WTC11 (cell line): ENCODE measurements at regions of chr11 and their contacts with region 1.

Region 1: DNA sequence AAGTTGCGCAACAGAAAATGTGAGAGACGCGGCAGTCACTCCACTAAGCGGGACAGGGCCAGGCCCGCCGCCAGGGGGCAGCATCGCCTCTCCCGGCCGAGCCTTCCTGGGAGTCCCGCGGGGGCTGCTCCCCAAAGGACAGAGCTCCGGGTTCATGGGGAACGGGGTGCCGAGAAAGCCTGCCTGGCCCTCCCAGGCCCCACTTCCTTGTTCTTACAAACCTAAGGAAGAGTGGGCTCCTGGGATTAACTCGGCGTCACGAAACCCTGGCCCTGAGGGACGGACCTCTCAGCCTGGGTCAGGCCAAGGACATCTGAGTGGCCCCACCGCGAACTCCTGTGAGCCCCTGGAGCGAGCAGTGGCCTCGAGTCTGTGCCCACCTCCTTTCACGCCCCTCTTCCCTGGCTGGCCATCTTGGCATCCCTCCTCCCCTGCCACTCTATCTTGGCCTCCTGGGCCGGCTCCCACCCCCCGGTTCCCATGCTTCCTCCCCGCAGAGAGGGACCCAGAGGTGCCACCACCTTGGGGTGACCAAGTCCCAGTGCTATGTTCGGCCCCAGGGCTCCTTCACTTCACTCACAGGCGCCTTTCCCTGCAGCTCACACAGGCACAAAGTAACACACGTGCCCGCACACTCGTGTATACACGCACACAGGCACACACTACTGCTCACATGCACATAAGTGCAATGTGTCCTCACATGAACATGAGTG is 99.9 kb upstream of the FGF3 start:
- DNase-seq: peak; percentile 93
- ATAC-seq: peak; percentile 70
- H3K4me3 Mint-ChIP-seq: no peak overlapping the region
- H3K27ac Mint-ChIP-seq: no peak overlapping the region
- H3K4me1 Mint-ChIP-seq: 0 out of 2 replicates have a peak, but pooled peaks cover 3% of the 10 kb centered on the region
- H3K27me3 Mint-ChIP-seq: peaks cover 32% of the 10 kb centered on the region
- CTCF ChIP-seq: peak; percentile 87

Region 2: GRCh38 chr11:69888483-69889076 is 30.5 kb before region 1 on chr11:
- CTCF ChIA-PET with region 1: interaction called, 74 read pairs
- POLR2A ChIA-PET with region 1: no interaction called
- DNase-seq: peak; percentile 92
- ATAC-seq: peak; percentile 58
- H3K4me3 Mint-ChIP-seq: no peak overlapping the region
- H3K27ac Mint-ChIP-seq: no peak overlapping the region
- H3K4me1 Mint-ChIP-seq: peaks cover 35% of the 10 kb centered on the region
- H3K27me3 Mint-ChIP-seq: peaks cover 31% of the 10 kb centered on the region
- CTCF ChIP-seq: peak; percentile 95

Region 3: DNA sequence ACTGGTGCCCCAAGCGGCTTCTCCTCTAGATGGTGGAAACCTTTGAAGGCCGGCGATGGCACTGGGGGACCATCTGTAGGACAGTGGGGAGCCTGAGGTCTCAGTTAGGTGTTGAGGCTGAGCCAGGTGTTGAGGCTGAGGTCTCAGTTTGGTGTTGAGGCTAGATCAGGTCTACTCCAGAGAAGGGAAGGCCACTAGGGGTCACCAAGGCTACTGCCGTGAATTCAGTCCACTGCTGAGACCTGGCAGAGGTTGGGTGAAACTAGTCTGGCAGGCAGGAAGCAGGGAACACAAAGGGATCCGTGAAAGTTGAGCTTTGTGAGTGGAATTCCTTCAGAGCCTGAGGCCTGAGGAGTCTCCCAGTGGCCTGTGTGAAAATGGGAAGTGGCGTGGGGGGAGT is 24.0 kb after region 1 on chr11:
- CTCF ChIA-PET with region 1: interaction called, 24 read pairs
- POLR2A ChIA-PET with region 1: interaction called, 4 read pairs
- DNase-seq: peak; percentile 30
- ATAC-seq: peak; percentile 54
- H3K4me3 Mint-ChIP-seq: no peak overlapping the region
- H3K27ac Mint-ChIP-seq: no peak overlapping the region
- H3K4me1 Mint-ChIP-seq: peaks cover 7% of the 10 kb centered on the region
- H3K27me3 Mint-ChIP-seq: no peaks in the 10 kb centered on the region; the same call in 1 of the 2 replicates
- CTCF ChIP-seq: no peak

Region 4: GRCh38 chr11:70043482-70043881 is 124.4 kb after region 1 on chr11:
- CTCF ChIA-PET with region 1: no interaction called
- POLR2A ChIA-PET with region 1: no interaction called
- DNase-seq: no peak
- ATAC-seq: no peak
- H3K4me3 Mint-ChIP-seq: no peak overlapping the region
- H3K27ac Mint-ChIP-seq: no peak overlapping the region
- H3K4me1 Mint-ChIP-seq: no peaks in the 10 kb centered on the region
- H3K27me3 Mint-ChIP-seq: peaks cover 25% of the 10 kb centered on the region
- CTCF ChIP-seq: no peak

Region 5: DNA sequence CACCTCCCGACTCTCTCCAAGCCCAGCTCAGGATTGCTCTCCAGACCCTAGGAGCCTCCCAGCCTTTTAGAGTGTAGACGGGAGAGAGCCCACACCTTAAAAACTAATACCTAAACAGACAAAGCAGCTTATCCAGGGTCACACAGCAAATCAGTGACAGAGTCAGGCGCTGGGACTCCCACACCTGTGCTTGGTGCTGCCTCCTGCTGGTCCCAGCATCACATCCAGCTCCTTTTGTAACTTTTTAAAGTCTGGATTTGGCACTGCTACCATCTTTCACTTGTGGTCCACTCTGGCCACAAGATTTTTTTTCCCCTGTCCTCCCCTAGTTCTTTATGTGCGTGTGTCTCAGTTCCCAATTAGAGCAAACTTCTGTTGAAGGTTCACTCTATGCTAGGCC is 163.7 kb after region 1 on chr11:
- CTCF ChIA-PET with region 1: interaction called, 18 read pairs
- POLR2A ChIA-PET with region 1: no interaction called
- DNase-seq: no peak
- ATAC-seq: no peak
- H3K4me3 Mint-ChIP-seq: no peak overlapping the region
- H3K27ac Mint-ChIP-seq: no peak overlapping the region
- H3K4me1 Mint-ChIP-seq: peaks cover 3% of the 10 kb centered on the region; the same call in 1 of the 2 replicates
- H3K27me3 Mint-ChIP-seq: peaks cover 29% of the 10 kb centered on the region
- CTCF ChIP-seq: no peak

Region 6: GRCh38 chr11:70158201-70158600 is 239.1 kb after region 1 on chr11:
- CTCF ChIA-PET with region 1: interaction called, 11 read pairs
- POLR2A ChIA-PET with region 1: no interaction called
- DNase-seq: peak; percentile 82
- ATAC-seq: peak; percentile 95
- H3K4me3 Mint-ChIP-seq: no peak overlapping the region
- H3K27ac Mint-ChIP-seq: no peak overlapping the region
- H3K4me1 Mint-ChIP-seq: 0 out of 2 replicates have a peak, but pooled peaks cover 2% of the 10 kb centered on the region
- H3K27me3 Mint-ChIP-seq: no peaks in the 10 kb centered on the region
- CTCF ChIP-seq: 0 out of 2 replicates have a peak, but pooled peaks have one; percentile 15

Region 7: DNA sequence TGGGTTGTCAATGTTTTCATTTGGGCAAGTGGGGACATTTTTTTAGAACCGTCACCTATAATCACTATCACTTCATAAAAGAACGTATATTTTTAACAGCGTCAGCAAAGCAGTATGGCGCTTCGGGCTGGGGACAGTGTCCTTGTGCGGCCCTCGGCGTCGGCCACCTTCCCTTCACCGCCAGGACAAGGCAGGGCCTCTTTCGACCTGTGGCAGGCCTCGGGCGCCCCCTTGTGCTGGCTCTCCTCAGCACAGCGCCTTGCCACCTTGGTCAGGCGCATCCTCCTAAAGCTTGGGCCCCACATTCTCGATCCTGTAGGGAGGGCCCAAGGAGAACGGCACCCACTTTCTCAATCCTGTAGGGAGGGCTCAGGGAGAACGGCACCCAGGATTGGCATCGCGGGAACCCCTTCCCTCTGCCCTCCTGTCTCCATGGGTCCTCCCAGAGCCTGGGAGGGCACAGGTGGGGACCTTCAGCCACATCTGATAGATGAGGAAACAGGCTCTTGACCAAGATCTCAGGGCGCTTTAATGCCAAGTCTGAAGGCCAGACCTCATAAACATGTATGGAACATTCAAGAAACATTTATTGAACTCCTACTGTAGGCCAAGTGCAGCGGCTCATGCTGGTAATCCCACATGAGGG is 272.5 kb after region 1 on chr11:
- CTCF ChIA-PET with region 1: interaction called, 42 read pairs
- POLR2A ChIA-PET with region 1: no interaction called
- DNase-seq: peak; percentile 93
- ATAC-seq: peak; percentile 94
- H3K4me3 Mint-ChIP-seq: no peak overlapping the region
- H3K27ac Mint-ChIP-seq: no peak overlapping the region
- H3K4me1 Mint-ChIP-seq: peaks cover 3% of the 10 kb centered on the region
- H3K27me3 Mint-ChIP-seq: no peaks in the 10 kb centered on the region
- CTCF ChIP-seq: peak; percentile 92